Posterior cingulate gyrus (tissue), 11 donors: ENCODE measurements at regions of chr6 and their contacts with region 1.

Region 1: DNA sequence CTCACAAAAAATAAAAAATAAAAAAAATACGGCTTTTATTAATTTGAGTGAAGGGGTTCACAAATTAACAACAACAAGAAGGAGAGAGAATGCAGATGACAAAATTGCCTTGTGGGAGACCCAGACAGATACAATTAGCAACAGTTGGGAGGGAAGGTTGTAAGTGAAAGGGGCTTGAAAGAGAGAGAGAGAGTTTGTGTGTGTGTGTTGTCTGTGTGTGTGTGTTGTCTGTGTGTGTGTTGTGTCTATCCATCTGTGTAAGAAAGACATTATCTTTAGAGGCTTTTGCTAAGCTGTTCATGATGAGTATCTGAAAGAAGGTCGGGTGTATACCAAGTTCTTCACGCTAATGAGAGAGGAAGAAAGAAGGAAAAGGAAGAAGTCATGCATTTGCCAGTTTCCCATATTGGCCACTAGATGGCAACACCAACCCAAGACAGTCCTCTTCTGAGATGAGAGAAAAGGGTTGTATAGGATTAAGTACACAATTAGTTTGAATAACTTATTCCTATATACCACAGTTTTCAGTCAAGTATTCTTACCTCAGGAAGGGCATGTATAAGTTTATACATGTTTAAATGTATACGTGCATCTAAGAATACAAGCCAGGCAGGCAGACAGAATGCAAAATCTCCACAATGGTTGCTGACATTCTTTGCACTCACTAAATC is 63.7 kb upstream of the CD2AP start:
- DNase-seq: peak in 5 of 10 donors; percentile 18 to 77 (median 30)

Region 2: DNA sequence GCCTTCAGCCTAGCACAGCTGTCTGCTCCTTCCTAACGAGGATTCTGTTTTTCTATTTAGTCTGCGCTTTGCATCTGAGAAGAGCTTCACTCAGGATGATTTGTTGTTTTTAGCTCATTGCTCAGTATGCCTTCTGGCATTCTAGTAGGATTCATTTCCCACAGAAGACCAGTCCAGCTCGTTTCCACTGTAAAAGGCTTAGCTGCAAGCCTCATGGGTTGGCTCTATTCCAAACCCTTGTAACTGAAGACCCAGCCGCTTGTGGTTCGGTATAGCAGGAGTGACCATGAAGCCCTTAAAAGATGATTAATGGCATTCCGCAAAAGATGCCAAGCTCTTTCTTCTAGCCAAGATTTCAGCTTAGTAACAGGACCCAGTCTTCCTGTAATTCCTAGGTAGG is 379.0 kb before region 1 on chr6:
- intact Hi-C with region 1: no loop called
- DNase-seq: no peak

Region 3: GRCh38 chr6:47631269-47631772 is 217.4 kb after region 1 on chr6:
- intact Hi-C with region 1: loop called (anchors 5 kb)
- DNase-seq: peak in 1 of 10 donors; percentile 67

Region 4: GRCh38 chr6:48255094-48255493 is 841.2 kb after region 1 on chr6:
- intact Hi-C with region 1: loop called (anchors 10 kb)
- DNase-seq: no peak